Activated CD4-positive, alpha-beta memory T cell treated with anti-CD3 and anti-CD28 coated beads, Interleukin-2, amount 10 ng/mL, durations not matched to agents 7 days and 5 days (primary cell): ENCODE measurements at regions of chr2 and their contacts with region 1.

Region 1: DNA sequence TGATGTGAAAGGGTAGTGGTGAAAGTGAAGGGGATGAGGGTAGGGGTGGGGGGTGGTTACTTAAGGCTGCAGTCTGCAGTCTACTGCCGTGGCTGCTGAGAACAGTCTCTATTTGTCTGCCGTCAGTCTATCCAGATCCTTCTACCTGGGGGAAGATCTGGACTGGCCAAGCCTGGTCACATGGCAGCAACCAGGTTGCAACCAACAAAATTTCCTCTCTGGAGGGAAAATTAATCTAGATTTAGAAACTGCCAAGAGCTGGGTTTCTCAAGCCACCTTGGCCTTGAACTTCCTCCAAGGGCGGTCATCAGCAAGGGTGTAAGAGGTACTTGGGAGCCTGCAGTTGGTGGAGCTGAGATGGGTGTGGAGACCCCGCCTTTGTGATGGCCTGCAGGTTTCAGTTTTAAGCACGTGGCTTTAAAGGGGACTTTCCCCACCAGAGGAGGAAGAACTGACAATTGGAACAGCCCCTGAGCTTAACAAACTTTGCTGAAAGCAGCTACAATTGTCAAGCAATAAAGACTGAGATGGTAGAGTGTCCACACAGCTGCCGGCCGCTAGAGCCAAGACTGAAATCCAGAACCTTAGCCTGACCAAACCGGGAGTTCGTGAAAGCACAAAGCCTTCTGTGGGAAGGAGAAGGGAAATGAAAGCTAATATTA is 31.4 kb upstream of the KCMF1 start:
- DNase-seq: peak; percentile 87
- H3K4me3 Mint-ChIP-seq: peak overlapping the region; percentile 72
- H3K27ac Mint-ChIP-seq: peak overlapping the region; percentile 98
- H3K4me1 Mint-ChIP-seq: peaks cover 53% of the 10 kb centered on the region
- H3K27me3 Mint-ChIP-seq: no peaks in the 10 kb centered on the region

Region 2: GRCh38 chr2:84846041-84846663 is 93.4 kb before region 1 on chr2:
- CTCF ChIA-PET with region 1: no interaction called
- POLR2A ChIA-PET with region 1: interaction called, 15 read pairs
- DNase-seq: peak; percentile 41
- H3K4me3 Mint-ChIP-seq: peak overlapping the region; percentile 19
- H3K27ac Mint-ChIP-seq: peak overlapping the region; percentile 96
- H3K4me1 Mint-ChIP-seq: peaks cover 91% of the 10 kb centered on the region
- H3K27me3 Mint-ChIP-seq: no peaks in the 10 kb centered on the region

Region 3: DNA sequence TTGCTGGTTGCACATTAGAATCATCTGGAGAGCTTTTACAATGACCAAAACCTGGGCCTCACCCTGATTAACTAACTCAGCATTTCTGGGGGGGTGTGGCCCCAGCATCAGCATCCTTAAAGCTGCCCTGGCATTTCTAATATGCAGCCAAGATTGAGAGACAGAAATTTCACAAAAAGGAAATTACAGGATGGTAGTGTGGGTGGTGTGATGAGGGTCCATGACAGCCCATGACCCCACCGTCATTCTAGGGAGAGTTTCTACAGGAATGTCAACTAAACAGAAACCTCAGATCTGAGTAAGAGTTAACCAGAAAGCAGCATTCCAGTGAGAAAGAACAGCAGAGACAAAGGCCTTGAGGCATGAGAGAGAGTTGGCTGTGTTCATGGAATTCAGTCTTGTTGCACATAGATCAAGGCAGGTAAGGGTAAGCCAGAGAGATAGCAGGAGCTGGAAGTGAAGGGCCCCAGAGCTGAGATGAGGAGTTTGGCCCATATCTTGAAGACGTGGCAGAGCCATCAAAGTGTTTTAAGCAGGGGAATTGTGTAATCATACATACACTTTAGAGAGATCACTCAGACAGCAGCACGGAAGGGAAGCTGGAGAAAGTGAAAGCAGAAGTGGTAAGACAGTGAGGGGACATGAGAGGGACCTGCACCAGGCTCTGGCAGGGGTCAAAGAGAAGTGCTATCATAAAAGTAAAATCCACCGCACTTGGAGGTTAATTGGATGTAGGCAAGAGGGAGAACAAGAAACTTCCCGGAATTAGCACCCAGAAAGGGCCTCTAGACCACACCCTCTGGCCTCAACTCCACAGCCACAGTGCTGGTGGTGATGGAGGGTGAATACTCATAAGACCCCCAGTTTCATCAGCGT is 50.9 kb before region 1 on chr2:
- CTCF ChIA-PET with region 1: interaction called, 4 read pairs
- POLR2A ChIA-PET with region 1: interaction called, 15 read pairs
- DNase-seq: peak; percentile 59
- H3K4me3 Mint-ChIP-seq: peak overlapping the region; percentile 74
- H3K27ac Mint-ChIP-seq: peak overlapping the region; percentile 94
- H3K4me1 Mint-ChIP-seq: peaks cover 42% of the 10 kb centered on the region
- H3K27me3 Mint-ChIP-seq: no peaks in the 10 kb centered on the region

Region 4: GRCh38 chr2:84905181-84906107 is 34.1 kb before region 1 on chr2 and contains the start of gene TMSB10:
- CTCF ChIA-PET with region 1: interaction called, 4 read pairs
- POLR2A ChIA-PET with region 1: interaction called, 117 read pairs
- DNase-seq: peak; percentile 91
- H3K4me3 Mint-ChIP-seq: peak within 1 kb of the TSS; percentile 89
- H3K27ac Mint-ChIP-seq: peak within 1 kb of the TSS; percentile 94
- H3K4me1 Mint-ChIP-seq: peaks cover 67% of the 10 kb centered on the region
- H3K27me3 Mint-ChIP-seq: no peaks in the 10 kb centered on the region
- total RNA-seq, gene TMSB10: 5,686 to 5,768 TPM

Region 5: DNA sequence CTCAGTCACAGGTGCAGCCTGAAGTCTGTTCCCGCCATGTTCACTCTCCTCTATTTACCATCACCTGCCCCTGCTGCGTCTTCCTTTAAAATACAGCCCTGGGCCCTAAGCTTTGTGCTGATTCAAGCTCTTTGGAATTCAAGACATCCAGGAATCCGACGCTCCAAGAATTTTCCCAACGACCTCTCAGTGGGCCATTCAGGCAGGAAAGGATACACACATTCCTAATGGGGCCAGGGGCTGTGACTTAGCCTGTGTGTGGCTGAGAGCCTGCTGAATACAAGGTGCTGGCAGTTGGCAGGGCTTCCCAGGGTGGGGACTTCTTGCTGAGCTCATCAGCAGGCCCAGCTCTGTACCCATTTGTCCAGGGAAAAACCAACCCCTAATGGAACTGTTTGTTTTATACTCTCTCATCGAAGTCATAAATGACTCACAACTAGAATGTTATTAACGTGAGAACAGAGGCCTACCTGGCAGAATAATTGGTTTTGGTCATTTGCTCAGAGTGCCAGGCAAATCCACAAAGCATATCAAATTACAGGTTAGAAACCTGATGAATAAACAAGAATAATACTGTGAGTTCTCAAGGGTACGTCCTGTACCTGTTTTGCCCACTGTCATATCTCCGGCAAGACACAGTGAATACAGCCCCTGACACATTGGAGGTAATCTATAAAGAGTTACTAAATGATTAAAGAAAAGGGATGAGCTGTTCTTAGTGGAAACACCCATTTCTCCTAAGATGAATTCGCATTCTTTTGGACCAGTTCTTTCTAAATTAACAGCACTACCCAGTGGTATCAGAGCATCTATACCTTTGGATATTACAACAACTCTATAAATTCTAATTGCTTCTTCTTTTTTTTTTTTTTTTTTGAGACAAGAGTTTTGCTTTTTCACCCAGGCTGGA is 18.8 kb after region 1 on chr2:
- CTCF ChIA-PET with region 1: no interaction called
- POLR2A ChIA-PET with region 1: interaction called, 34 read pairs
- DNase-seq: no peak
- H3K4me3 Mint-ChIP-seq: no peak overlapping the region
- H3K27ac Mint-ChIP-seq: no peak overlapping the region
- H3K4me1 Mint-ChIP-seq: peaks cover 18% of the 10 kb centered on the region
- H3K27me3 Mint-ChIP-seq: no peaks in the 10 kb centered on the region

Region 6: DNA sequence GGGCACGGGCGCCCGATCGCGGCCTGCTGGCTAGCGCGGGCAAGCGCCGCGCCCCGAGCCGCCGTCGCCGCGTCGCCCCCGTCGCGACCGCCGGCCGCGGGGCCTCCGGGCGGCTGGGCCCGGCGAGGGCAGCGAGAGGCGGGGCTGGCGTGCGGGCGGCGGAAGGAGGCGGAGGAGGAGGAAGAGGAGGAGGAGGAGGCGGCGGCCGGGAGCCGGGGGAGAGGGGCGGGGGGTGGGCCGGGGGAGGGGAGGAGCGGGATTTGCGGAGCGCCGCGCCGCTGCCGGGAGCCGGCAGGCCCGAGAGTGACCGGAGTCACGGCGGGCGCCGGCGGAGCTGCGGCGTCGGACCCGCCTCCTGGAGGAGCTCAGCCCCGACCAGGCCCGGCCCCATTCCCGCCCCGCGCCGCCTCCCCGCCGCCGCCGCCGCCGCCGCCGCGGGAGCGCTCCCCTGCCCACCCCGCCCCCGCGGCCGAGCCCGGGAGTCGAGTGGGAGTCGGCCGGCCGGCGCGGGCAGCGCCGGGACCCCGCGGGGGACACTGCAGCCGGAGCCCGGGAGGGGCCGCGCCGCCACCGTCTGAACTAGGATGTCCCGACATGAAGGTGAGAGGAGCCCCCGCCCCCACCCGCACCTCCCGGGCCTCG is 31.4 kb after region 1 on chr2 and contains the start of gene KCMF1:
- CTCF ChIA-PET with region 1: interaction called, 20 read pairs
- POLR2A ChIA-PET with region 1: interaction called, 351 read pairs
- DNase-seq: peak; percentile 76
- H3K4me3 Mint-ChIP-seq: peak within 1 kb of the TSS; percentile 96
- H3K27ac Mint-ChIP-seq: peak within 1 kb of the TSS; percentile 100
- H3K4me1 Mint-ChIP-seq: peaks cover 47% of the 10 kb centered on the region
- H3K27me3 Mint-ChIP-seq: no peaks in the 10 kb centered on the region
- total RNA-seq, gene KCMF1: 87.0 to 92.9 TPM

Region 7: GRCh38 chr2:85001595-85001994 is 62.0 kb after region 1 on chr2:
- CTCF ChIA-PET with region 1: no interaction called
- POLR2A ChIA-PET with region 1: interaction called, 11 read pairs
- DNase-seq: no peak
- H3K4me3 Mint-ChIP-seq: no peak overlapping the region
- H3K27ac Mint-ChIP-seq: no peak overlapping the region
- H3K4me1 Mint-ChIP-seq: peaks cover 38% of the 10 kb centered on the region
- H3K27me3 Mint-ChIP-seq: no peaks in the 10 kb centered on the region